HEK293 (cell line): ENCODE measurements at regions of chr10 and their contacts with region 1.

Region 1: GRCh38 chr10:7787857-7788638 is at the starts of genes ATP5F1C and KIN:
- H3K4me3 ChIP-seq: peak within 1 kb of the TSS; percentile 93
- H3K27ac ChIP-seq: peak within 1 kb of the TSS; percentile 86
- H3K4me1 ChIP-seq: peaks cover 6% of the 10 kb centered on the region; the same call in 1 of the 2 replicates
- CTCF ChIP-seq: no peak

Region 2: DNA sequence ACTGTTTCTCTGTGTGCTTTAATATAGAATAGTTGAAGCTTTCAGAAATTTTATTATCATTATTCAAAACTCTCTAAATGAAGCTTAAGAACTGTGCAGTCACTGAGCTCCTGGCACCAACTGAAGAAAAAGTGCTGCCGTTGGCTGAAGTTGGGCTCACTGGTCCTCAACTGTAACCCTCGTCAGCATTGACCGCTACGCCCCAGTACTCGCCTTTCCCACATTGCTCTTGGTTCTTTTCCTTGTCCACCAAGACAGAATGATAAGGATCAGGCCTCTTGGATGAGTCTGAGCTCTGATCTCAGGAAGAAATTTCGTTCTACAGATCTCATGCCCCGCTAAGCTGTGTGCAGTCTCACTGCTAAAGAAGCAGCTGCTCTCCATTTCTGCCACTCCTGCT is 22.4 kb after region 1 on chr10:
- CTCF ChIA-PET with region 1: no interaction called
- POLR2A ChIA-PET with region 1: interaction called, 19 read pairs
- H3K4me3 ChIP-seq: no peak overlapping the region
- H3K27ac ChIP-seq: no peak overlapping the region
- H3K4me1 ChIP-seq: no peaks in the 10 kb centered on the region
- CTCF ChIP-seq: no peak

Region 3: DNA sequence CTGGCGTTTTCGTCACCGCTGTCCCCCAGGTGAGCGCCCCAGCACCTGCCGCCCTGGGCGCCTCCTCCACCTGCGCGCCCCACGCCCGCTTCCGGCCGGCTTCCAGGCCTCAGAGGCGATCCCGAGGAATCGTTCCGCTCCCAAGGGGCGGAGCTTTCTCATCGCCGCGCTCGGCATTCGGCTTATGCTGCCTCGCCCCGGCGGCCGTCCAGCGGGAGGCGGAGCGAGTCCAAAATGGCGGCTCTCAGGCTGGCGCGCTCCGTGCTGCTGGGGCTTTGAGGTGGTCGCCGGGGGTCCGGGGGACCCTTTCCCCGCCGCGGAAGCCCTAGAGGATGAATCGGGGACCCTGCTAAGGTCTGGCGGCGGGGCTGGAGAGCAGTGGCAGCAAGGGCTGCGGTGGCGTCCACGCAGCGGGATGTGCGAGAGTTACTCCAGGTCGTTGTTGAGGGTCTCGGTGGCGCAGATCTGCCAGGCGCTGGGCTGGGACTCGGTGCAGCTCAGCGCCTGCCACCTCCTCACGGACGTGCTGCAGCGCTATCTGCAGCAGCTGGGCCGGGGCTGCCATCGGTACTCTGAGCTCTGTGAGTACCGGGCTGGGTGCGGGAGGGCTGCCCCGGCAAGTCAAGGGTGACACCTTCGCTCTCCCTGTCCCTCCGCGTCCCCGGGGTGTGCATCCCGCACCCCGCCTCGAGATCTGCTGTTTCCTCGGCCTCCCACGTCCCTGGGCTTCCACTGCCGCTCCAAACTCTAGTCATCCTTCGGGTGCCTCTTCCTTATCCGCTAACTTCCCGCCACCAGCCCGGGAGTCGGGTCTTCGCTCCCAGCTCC is 30.5 kb after region 1 on chr10 and contains the start of gene TAF3:
- CTCF ChIA-PET with region 1: no interaction called
- POLR2A ChIA-PET with region 1: interaction called, 33 read pairs
- H3K4me3 ChIP-seq: peak within 1 kb of the TSS; percentile 75
- H3K27ac ChIP-seq: peak within 1 kb of the TSS; percentile 61; the same call in 1 of the 2 replicates
- H3K4me1 ChIP-seq: peaks cover 3% of the 10 kb centered on the region; the same call in 1 of the 2 replicates
- CTCF ChIP-seq: no peak